GM12878 (cell line): ENCODE measurements at regions of chr10 and their contacts with region 1.

Region 1: DNA sequence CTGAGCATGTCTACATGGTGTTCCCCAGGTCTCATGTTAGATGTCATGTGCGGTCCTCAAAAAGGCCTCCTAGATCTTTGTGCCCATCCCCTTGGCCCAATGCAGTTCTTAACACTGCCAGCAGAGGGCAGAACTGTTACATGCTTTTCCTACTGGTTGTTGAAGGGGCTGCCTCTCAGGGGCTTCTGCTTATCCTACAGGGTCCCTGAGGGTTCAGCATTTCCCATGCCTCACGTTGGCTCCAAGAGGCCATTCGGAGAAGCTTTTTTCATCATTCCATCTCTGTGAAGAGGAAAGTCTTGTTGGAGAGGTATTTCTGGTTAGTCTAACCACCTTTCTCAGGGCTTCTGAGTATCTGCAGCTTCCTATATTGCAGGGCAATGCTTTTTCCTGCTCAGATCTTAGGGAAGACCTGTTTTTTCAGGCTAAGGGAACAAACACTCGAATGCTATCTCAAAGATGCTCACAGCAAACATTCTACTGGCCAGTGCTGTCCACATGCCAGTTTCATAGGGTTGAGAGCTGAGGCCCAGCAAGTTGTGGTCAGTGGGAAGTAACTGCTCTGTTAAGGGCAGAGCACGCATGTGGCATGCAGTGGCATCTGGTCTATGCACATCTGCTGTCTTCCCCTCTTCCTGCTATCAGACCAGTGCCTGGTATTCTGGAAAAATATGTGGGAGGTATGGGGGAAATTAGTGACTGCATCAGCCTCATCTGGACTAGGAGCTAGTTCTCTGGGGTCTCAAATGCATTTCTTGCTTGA is 31.5 kb downstream of the MBL2 start:
- DNase-seq: no peak
- ATAC-seq: peak; percentile 84
- H3K4me3 ChIP-seq: no peak overlapping the region
- H3K27ac ChIP-seq: no peak overlapping the region
- H3K4me1 ChIP-seq: no peaks in the 10 kb centered on the region
- H3K27me3 ChIP-seq: no peaks in the 10 kb centered on the region
- CTCF ChIP-seq: peak; percentile 76 to 95 (median 92)
- EP300 ChIP-seq: no peak
- POLR2A ChIP-seq: no peak
- RAD21 ChIP-seq: peak; percentile 66

Region 2: DNA sequence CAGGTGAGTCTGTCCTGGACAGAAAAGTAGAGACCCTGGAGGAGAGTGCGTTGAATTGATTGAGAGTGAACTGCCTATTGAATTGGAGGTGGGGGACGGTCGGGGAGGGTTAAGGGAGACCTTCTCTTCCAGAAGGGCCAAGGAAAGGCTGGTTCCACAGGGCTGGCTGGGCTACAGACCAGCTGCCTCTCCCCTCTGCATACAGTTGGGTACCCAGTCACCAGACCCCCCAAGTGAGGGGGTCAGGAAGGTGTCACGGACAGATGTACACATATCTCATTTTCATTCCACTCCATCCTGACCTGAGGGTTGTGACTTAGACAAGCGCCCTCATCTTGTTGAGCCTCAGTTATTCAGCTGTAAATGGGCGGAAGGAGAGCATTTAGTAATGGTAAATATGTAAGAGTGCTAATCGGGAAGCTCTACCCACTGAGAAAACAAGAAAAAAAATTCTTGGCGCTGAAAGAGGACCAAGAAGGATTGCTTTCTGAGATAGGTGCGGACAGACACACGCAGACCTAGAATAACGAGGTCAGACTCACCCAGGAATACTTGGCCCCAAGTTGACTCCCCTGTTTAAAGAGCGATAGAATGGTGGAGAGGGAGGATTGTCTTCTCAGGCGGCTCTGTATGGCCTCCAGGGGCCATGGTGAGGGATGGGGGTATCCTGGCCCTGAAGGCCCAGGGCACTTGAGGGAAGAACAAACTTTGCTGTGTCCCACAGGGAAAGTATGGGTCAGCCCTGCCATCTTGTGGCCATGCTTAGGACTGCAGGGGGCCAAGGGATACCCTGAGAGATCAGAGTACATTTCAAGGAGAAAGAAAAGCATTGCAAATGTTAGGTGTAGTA is 38.7 kb after region 1 on chr10:
- CTCF ChIA-PET with region 1: interaction called, 50 read pairs
- POLR2A ChIA-PET with region 1: no interaction called
- RAD21 ChIA-PET with region 1: interaction called, 19 read pairs
- SMC1A ChIA-PET with region 1: interaction called, 10 read pairs
- in situ Hi-C with region 1: loop called (anchors 5 kb)
- intact Hi-C with region 1: loop called (anchors 1 kb)
- DNase-seq: no peak
- ATAC-seq: peak; percentile 96
- H3K4me3 ChIP-seq: no peak overlapping the region
- H3K27ac ChIP-seq: no peak overlapping the region
- H3K4me1 ChIP-seq: no peaks in the 10 kb centered on the region
- H3K27me3 ChIP-seq: no peaks in the 10 kb centered on the region
- CTCF ChIP-seq: peak; percentile 87 to 96 (median 94)
- EP300 ChIP-seq: no peak
- POLR2A ChIP-seq: no peak
- RAD21 ChIP-seq: peak; percentile 85

Region 3: DNA sequence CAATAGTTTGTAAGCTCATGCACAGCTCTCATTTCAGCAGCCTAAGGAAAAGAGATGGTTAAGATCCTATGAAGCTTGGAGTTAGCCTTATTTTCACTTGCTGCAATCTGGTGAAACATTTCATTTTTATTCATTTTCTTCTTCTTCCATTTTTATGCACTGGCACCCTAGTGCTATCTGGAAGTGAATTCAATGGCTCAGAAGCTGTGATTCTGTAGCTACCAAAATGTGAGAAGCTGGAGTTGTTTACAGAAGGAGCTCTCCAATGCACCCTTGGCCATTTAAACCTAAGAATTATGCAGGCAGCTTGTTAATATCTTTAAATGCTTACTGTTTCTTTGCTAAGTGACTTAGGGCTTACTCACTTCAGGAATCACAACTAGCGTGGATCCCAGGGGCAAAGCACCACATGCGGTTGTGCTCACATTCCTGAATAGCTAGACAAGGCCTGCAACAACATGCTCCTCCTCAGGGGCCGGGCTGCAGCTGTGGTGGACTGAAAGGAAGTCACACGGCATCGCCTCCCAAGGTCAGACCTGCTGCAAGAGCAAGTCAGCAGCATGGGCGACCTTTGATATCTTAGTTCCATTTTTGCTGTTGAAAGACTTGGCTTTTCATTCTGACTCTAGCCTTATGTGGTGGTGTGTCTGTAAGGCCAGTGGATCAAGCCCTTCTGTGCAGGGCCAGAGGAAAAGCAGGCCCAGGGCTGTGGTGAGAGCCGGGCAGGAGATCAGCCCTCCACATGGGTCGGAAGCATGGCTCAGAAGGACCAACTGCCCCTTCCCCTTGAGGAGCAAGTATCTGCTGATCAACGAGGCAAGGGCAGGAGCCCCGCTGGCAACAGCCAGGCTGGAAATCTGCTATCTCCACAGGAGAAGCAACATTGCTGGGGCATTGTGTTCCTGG is 123.4 kb after region 1 on chr10:
- CTCF ChIA-PET with region 1: no interaction called
- POLR2A ChIA-PET with region 1: no interaction called
- RAD21 ChIA-PET with region 1: no interaction called
- SMC1A ChIA-PET with region 1: no interaction called
- in situ Hi-C with region 1: no loop called
- intact Hi-C with region 1: no loop called
- DNase-seq: no peak
- ATAC-seq: peak; percentile 87
- H3K4me3 ChIP-seq: no peak overlapping the region
- H3K27ac ChIP-seq: no peak overlapping the region
- H3K4me1 ChIP-seq: no peaks in the 10 kb centered on the region
- H3K27me3 ChIP-seq: no peaks in the 10 kb centered on the region
- CTCF ChIP-seq: no peak
- EP300 ChIP-seq: no peak
- POLR2A ChIP-seq: no peak
- RAD21 ChIP-seq: no peak